Endothelial cell of umbilical vein (primary cell): ENCODE measurements at regions of chr19 and their contacts with region 1.

Region 1: DNA sequence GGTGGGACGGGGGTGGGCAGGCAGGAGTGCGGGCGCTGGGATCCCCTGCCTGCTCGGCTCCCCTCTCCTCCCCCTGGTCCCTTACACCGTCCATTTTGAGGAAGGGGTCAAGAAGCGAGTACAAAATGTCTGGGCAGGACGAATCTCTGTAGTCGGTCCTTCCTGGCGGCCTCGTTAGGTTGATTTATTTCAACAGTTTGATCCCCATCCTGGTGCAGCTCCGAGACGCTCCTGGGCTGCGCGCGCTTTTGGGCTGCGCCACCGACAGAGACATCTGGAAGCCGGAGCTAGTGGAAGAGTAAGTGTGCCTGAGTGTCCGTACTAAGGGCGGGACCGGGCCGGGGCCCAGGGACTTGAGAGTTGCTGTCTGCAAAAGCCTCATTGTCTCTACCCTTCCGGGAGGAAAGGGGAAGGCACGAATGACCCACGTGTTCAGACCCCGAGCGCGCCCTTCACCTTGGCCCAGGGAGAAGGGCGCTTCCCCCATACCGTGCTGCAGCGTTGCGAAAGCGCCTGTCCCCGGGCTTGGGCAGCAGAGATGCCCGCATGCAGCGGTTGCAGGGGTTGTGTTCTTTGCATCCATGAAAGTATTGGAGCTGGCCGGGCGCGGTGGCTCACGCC is 1.8 kb downstream of the ZNF114 start:
- DNase-seq: peak; percentile 31
- H3K4me3 ChIP-seq: peak overlapping the region; percentile 23 to 53 (median 30)
- H3K27ac ChIP-seq: no peak overlapping the region
- H3K4me1 ChIP-seq: peaks cover 5% of the 10 kb centered on the region
- H3K27me3 ChIP-seq: no peaks in the 10 kb centered on the region
- CTCF ChIP-seq: no peak
- POLR2A ChIP-seq: no peak

Region 2: DNA sequence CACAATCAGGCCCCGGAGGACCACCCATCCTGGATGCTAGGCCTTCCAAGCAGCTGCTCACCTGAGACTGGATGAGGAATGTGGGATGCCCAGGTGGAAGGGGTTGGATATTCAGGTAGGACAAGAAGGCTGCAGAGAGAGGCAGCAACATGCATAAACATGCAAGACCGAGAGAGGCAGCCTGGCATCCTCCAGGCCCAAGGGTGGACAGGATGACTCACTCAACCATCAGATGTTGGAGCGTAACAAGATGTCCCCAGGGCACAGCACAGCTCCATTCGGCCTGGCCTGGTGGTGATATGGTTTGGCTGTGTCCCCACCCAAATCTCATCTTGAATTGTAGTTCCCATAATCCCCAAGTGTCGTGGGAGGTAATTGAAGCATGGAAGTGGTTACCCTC is 217.8 kb before region 1 on chr19:
- CTCF ChIA-PET with region 1: no interaction called
- POLR2A ChIA-PET with region 1: no interaction called
- dilution Hi-C with region 1: no loop called
- intact Hi-C with region 1: no loop called
- DNase-seq: no peak
- H3K4me3 ChIP-seq: no peak overlapping the region
- H3K27ac ChIP-seq: no peak overlapping the region
- H3K4me1 ChIP-seq: no peaks in the 10 kb centered on the region
- H3K27me3 ChIP-seq: no peaks in the 10 kb centered on the region
- CTCF ChIP-seq: no peak
- POLR2A ChIP-seq: no peak

Region 3: DNA sequence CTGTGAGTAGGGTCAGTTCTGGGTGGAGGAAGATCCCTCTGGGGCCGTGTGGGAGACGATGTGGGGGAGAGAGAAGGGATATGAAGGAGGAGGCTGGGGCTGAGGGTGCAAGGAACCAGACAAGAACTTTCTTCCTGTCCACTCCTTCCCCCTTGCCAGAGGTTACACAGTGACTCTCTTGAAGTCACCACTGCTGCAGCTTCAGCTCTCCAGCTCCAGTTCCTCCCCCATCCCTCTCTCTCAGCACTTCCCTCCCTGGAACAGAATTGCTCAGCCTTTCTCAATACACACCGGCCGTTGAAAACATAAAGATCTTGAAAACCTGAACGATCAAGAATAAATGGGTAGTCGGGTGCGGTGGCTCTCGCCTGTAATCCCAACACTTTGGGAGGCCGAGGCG is 96.1 kb before region 1 on chr19:
- CTCF ChIA-PET with region 1: no interaction called
- POLR2A ChIA-PET with region 1: no interaction called
- dilution Hi-C with region 1: no loop called
- intact Hi-C with region 1: no loop called
- DNase-seq: no peak
- H3K4me3 ChIP-seq: no peak overlapping the region
- H3K27ac ChIP-seq: no peak overlapping the region
- H3K4me1 ChIP-seq: peaks cover 10% of the 10 kb centered on the region
- H3K27me3 ChIP-seq: no peaks in the 10 kb centered on the region
- CTCF ChIP-seq: no peak
- POLR2A ChIP-seq: no peak

Region 4: GRCh38 chr19:48249502-48250014 is 22.1 kb before region 1 on chr19:
- CTCF ChIA-PET with region 1: interaction called, 3 read pairs
- POLR2A ChIA-PET with region 1: interaction called, 11 read pairs
- dilution Hi-C with region 1: no loop called
- intact Hi-C with region 1: no loop called
- DNase-seq: peak; percentile 97
- H3K4me3 ChIP-seq: peak overlapping the region; percentile 10 to 60 (median 51)
- H3K27ac ChIP-seq: peak overlapping the region; percentile 80
- H3K4me1 ChIP-seq: peaks cover 63% of the 10 kb centered on the region
- H3K27me3 ChIP-seq: no peaks in the 10 kb centered on the region
- CTCF ChIP-seq: no peak
- POLR2A ChIP-seq: peak; percentile 96

Region 5: DNA sequence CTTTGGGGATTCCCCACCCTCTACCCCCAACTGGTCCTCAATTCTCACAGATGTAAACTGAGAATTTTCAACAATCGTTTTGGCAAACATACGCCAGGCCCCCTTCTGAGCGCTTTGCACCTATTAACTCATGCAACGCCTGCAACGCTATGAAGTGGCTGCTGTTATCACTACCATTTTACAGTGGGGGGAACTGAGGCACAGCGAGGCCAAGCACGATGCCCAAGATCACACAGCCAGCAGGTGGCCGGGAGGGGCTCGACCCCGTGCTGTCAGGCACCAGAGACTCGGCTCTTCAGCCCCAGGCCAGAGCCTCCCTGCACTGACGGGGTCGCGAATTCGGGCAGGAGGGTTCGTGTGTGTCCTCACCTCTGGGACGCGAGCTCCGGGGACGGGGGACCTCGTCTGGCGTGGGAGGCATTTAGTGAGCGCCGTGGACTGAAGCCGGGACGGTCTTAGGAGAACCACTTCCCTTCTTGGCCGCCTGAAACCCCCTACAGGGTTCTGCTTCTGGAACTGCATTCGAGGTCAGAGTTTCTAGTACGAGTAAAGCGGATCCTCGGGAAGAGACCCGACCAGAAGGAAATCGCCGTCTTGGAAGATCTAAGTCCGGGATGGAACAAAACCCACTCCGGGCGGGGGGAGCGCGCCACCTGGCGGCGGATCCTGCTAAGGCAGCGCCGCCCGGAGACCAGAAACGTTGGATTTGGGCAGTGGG is 19.3 kb after region 1 on chr19:
- CTCF ChIA-PET with region 1: interaction called, 126 read pairs
- POLR2A ChIA-PET with region 1: interaction called, 5 read pairs
- dilution Hi-C with region 1: no loop called
- intact Hi-C with region 1: loop called (anchors 1 kb)
- DNase-seq: peak; percentile 78
- H3K4me3 ChIP-seq: peak overlapping the region; percentile 4 to 58 (median 42)
- H3K27ac ChIP-seq: no peak overlapping the region
- H3K4me1 ChIP-seq: peaks cover 9% of the 10 kb centered on the region
- H3K27me3 ChIP-seq: no peaks in the 10 kb centered on the region
- CTCF ChIP-seq: peak; percentile 97 to 98
- POLR2A ChIP-seq: no peak

Region 6: DNA sequence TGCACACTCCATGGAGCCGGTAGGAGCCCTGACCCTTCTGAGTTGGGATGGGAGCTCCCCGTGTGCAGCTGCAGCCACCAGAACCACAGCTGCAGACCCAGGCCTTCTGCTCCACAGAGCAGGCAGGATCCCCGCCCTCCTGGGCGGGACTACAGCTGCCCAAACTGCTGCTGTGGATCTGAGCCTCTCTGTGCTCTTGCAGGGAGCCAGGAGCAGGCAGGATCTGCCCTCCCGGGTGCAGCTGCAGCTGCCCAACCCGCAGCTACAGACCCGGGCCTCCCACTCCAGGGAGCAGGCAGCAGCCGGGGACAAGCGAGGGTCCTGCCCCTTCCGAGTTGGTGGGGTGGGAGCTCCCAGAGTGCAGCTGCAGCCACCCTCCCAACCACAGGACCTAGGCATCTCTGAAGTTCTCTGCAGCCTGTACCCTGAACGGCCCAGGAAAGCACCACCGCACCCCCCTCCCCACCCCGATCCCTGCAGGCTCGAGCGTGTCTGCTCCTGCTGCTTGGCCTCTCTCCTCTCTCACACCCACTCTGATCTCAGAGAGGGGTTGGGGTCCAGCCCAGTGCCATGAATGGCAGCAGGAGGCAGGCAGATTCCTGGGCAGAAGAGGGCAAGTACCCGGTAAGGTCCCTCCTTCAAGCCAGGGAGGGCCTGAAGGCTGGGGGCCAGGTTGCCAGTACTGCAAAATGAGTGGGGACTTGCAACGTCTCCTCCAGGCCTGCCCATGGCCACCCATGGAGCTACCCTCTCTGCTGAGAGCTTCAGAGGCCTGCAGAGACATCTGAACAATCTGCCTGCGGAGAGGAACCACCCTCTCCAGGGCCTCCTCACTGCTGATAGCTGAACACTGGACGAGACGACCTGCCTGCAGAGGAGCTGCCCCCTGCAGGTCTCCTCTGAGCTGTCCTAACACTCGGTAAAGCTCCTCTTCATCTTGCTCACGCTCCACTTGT is 37.3 kb after region 1 on chr19:
- CTCF ChIA-PET with region 1: interaction called, 7 read pairs
- POLR2A ChIA-PET with region 1: no interaction called
- dilution Hi-C with region 1: no loop called
- intact Hi-C with region 1: loop called (anchors 2 kb)
- DNase-seq: peak; percentile 25
- H3K4me3 ChIP-seq: no peak overlapping the region
- H3K27ac ChIP-seq: no peak overlapping the region
- H3K4me1 ChIP-seq: peaks cover 20% of the 10 kb centered on the region
- H3K27me3 ChIP-seq: peaks cover 4 to 6% of the 10 kb centered on the region in 2 experiments
- CTCF ChIP-seq: peak in 1 of 2 donors; percentile 36
- POLR2A ChIP-seq: no peak

Region 7: GRCh38 chr19:48333467-48334384 is 62.1 kb after region 1 on chr19:
- CTCF ChIA-PET with region 1: interaction called, 51 read pairs
- POLR2A ChIA-PET with region 1: interaction called, 5 read pairs
- dilution Hi-C with region 1: no loop called
- intact Hi-C with region 1: loop called (anchors 1 kb)
- DNase-seq: peak; percentile 92
- H3K4me3 ChIP-seq: peak overlapping the region in 2 of 3 experiments; percentile 20 to 33
- H3K27ac ChIP-seq: peak overlapping the region; percentile 64
- H3K4me1 ChIP-seq: peaks cover 16% of the 10 kb centered on the region
- H3K27me3 ChIP-seq: no peaks in the 10 kb centered on the region
- CTCF ChIP-seq: peak; percentile 77 to 94
- POLR2A ChIP-seq: no peak